ENCODE measurements at regions of chr7 and their contacts with region 1.

Region 1: DNA sequence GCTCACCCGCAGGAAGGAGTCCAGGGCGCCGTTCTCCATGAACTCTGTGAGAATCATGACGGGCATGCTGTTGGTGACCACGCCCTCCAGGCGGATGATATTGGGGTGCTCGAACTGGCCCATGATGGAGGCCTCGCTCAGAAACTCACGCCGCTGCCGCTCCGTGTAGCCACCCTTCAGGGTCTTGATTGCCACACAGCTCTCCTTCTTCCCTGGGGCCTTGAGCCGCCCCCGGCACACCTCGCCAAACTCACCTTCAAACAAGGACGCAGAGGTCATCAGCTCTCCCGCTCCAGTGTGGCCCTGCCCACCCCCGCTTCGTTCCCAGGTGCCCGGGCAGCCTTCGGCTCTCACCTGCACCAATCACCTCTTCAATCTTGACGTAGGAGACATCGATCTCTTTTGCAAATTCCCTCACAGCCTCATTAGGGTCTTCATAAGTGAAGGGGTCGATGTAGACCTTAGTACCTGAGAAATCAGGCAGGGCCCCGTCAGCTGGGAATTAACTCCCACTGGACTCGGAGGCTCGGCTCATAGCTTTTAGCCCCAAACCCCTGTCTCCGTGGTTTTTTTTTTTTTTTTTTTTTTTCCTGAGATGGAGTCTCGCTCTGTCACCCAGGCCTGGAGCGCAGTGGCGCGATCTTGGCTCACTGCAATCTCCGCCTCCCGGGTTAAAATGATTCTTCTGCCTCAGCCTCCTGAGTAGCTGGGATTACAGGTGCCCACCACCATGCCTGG is 14.4 kb downstream of the EPHB4 start:
- DNase-seq: no peak
- H3K4me3 ChIP-seq: no peak overlapping the region
- H3K27ac ChIP-seq: no peak overlapping the region
- H3K4me1 ChIP-seq: no peaks in the 10 kb centered on the region
- H3K27me3 ChIP-seq: no peaks in the 10 kb centered on the region
- CTCF ChIP-seq: no peak

Region 2: DNA sequence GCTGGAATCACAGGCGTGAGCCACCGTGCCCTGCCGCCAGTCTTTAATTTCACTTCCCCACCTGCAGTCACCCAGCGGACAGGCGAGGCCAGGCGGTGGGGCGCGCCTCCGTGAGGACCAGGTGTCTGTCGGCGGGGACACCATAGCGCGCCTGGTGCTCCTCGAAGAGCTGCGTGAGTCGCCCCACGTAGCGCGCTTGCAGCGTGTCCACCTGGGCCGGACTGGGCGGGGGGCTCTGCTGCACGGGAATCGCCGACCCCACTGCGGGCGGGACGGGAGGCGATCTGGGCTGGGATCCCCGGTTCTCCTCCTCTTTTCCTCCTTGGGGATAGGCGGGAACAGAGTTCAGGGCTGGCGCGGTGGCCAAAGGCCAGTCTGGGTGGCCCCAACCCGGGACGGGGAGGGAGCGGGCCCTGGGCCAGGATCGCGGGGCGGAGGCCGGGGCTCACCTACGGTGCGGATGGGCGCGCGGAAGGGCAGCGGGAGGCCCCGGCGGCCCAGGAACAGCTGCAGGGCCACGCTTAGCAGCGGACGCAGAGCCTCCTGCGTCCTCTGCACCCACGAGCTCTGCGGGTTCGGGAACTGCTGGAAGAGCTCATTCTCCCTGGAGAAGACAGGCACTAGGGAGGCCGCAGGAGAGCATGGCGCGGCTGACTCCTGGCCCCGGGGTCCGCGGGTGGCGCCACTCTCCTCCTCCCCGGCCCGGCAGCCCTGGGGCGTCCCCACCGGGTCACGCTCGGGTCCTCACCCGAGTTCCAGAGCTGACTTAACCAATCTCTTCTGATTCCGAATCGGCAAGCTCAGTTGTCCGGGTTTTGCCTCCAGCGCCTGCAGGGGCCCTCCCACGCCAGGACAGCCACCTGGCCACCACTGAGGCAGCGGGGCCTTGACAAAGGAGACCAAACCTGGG is 389.0 kb after region 1 on chr7:
- CTCF ChIA-PET with region 1: no interaction called
- POLR2A ChIA-PET with region 1: no interaction called
- intact Hi-C with region 1: no loop called
- DNase-seq: no peak
- H3K4me3 ChIP-seq: no peak overlapping the region
- H3K27ac ChIP-seq: no peak overlapping the region
- H3K4me1 ChIP-seq: no peaks in the 10 kb centered on the region
- H3K27me3 ChIP-seq: no peaks in the 10 kb centered on the region
- CTCF ChIP-seq: no peak

Region 3: DNA sequence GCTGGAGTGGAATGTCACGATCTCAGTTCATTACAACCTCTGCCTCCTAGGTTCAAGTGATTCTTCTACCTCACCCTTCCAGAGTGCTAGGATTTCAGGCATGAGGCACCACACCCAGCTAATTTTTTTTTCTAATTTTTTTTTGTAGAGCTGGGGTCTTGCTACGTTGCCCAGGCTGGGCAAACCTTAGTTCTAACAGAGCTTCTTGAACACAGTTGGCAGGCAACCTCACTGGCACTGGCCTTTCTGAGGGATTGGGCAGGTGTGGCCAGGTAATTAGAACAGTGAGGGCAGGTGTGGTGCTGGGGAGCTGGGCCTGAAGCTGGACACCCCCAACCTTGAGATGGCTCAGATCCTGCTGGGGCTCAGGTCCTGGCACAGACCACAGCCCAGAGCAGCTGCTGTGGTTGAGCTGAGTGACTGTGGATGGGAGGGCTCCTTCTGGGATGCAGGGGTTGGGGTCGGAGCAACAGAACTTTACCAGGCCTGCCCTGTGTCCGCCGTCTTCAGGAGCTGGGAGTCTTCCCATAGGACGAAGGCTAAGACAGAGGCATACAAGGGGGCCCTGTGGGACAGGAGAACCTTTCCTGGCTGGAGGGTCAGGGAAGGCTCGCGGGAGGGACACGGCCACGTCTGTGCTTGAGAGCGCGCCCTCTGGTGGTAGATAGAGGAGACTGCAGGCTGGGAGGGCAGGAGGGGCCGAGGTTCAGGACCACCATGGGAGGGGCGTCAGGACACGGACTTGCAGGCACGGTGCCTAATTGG is 598.0 kb after region 1 on chr7:
- CTCF ChIA-PET with region 1: interaction called, 11 read pairs
- POLR2A ChIA-PET with region 1: no interaction called
- intact Hi-C with region 1: no loop called
- DNase-seq: peak; percentile 42
- H3K4me3 ChIP-seq: no peak overlapping the region
- H3K27ac ChIP-seq: no peak overlapping the region
- H3K4me1 ChIP-seq: no peaks in the 10 kb centered on the region
- H3K27me3 ChIP-seq: no peaks in the 10 kb centered on the region
- CTCF ChIP-seq: peak; percentile 97